Esophagus muscularis mucosa (tissue), 4 donors: ENCODE measurements at regions of chr4 and their contacts with region 1.

Region 1: GRCh38 chr4:16001484-16001858 is 38.5 kb upstream of the FGFBP2 start:
- DNase-seq: no peak
- H3K4me3 ChIP-seq: no peak overlapping the region
- H3K27ac ChIP-seq: no peak overlapping the region
- H3K4me1 ChIP-seq: peaks cover 6 to 9% (median 9%) of the 10 kb centered on the region in 4 donors
- H3K27me3 ChIP-seq: no peaks in the 10 kb centered on the region
- CTCF ChIP-seq: peak; percentile 78 to 86 (median 81)
- EP300 ChIP-seq: no peak
- POLR2A ChIP-seq: no peak

Region 2: DNA sequence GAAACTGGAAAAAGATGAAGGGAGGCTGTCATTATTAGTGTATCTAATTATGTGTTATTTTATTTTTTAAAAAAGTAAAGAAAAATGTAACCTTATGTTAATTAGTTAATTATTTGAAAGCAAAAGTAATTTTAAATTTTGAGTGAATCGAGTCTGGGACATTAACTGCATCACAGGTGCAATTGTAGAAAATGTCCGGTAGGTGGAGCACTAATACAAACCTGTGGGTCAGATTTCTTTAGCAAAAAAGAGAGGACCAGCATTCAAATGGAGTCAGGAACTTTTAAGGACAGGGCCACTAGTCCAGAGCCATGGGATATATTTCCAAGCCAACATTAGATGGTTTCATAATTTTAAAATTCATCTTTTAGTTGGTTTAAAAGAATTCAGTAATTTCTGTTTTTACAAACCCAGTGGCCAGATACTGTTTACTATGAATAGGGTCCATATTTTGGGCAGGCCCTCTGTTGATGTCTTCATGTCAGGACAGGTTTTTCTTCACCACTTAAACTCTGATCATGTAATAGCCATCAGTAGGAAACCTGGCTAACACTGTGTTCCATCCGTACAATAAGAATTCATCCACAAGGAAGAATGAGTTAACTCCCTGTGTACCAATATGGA is 271.4 kb before region 1 on chr4:
- intact Hi-C with region 1: loop called (anchors 10 kb)
- DNase-seq: no peak
- H3K4me3 ChIP-seq: no peak overlapping the region
- H3K27ac ChIP-seq: no peak overlapping the region
- H3K4me1 ChIP-seq: peaks cover 0 to 3% (median 0%) of the 10 kb centered on the region in 4 donors
- H3K27me3 ChIP-seq: no peaks in the 10 kb centered on the region
- CTCF ChIP-seq: peak; percentile 78 to 88 (median 83)
- EP300 ChIP-seq: no peak
- POLR2A ChIP-seq: no peak

Region 3: GRCh38 chr4:15805583-15806517 is 195.6 kb before region 1 on chr4:
- intact Hi-C with region 1: loop called (anchors 2 kb)
- DNase-seq: no peak
- H3K4me3 ChIP-seq: no peak overlapping the region
- H3K27ac ChIP-seq: no peak overlapping the region
- H3K4me1 ChIP-seq: peaks cover 0 to 9% (median 6%) of the 10 kb centered on the region in 4 donors
- H3K27me3 ChIP-seq: no peaks in the 10 kb centered on the region
- CTCF ChIP-seq: peak; percentile 65 to 73 (median 73)
- EP300 ChIP-seq: no peak
- POLR2A ChIP-seq: no peak

Region 4: DNA sequence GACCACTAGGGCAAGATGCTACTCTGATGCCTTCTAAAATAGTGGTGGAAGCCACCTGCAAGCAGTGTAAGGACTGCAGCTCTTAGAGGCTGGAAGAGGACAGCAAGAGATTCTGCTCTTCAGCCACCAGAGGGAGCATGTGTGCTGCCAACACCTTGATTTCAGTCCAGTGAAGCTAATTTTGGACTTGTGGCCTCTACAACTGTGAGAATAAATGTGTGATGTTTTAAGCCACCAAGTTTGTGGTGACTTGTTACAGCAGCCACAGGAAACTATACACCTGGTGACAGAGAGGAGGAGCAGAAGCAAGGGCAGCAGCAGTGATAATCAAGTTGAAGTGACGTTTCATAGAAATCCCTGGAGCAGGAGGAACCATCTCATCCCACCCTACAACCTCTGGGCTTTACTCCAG is 118.8 kb before region 1 on chr4:
- intact Hi-C with region 1: loop called (anchors 2 kb)
- DNase-seq: no peak
- H3K4me3 ChIP-seq: no peak overlapping the region
- H3K27ac ChIP-seq: no peak overlapping the region
- H3K4me1 ChIP-seq: peaks cover 0 to 16% (median 6%) of the 10 kb centered on the region in 4 donors
- H3K27me3 ChIP-seq: no peaks in the 10 kb centered on the region
- CTCF ChIP-seq: peak; percentile 85 to 95 (median 86)
- EP300 ChIP-seq: no peak
- POLR2A ChIP-seq: no peak

Region 5: GRCh38 chr4:15963001-15963451 is 38.4 kb before region 1 on chr4 and contains the start of gene FGFBP2:
- intact Hi-C with region 1: loop called (anchors 5 kb)
- DNase-seq: no peak
- H3K4me3 ChIP-seq: no peak within 1 kb of the TSS
- H3K27ac ChIP-seq: no peak within 1 kb of the TSS
- H3K4me1 ChIP-seq: no peaks in the 10 kb centered on the region
- H3K27me3 ChIP-seq: no peaks in the 10 kb centered on the region
- CTCF ChIP-seq: peak in 2 of 3 experiments; percentile 10 to 30
- EP300 ChIP-seq: no peak
- POLR2A ChIP-seq: no peak
- total RNA-seq, gene FGFBP2: 2.8 to 6.7 (median 6.0) TPM